ENCODE measurements at regions of chr1 and their contacts with region 1.

Region 1: GRCh38 chr1:168439456-168440375 is 104.1 kb downstream of the XCL2 start:
- DNase-seq: peak; percentile 91
- H3K4me3 Mint-ChIP-seq: peak overlapping the region; percentile 41
- H3K27ac Mint-ChIP-seq: no peak overlapping the region
- H3K4me1 Mint-ChIP-seq: peaks cover 30% of the 10 kb centered on the region
- H3K27me3 Mint-ChIP-seq: no peaks in the 10 kb centered on the region

Region 2: DNA sequence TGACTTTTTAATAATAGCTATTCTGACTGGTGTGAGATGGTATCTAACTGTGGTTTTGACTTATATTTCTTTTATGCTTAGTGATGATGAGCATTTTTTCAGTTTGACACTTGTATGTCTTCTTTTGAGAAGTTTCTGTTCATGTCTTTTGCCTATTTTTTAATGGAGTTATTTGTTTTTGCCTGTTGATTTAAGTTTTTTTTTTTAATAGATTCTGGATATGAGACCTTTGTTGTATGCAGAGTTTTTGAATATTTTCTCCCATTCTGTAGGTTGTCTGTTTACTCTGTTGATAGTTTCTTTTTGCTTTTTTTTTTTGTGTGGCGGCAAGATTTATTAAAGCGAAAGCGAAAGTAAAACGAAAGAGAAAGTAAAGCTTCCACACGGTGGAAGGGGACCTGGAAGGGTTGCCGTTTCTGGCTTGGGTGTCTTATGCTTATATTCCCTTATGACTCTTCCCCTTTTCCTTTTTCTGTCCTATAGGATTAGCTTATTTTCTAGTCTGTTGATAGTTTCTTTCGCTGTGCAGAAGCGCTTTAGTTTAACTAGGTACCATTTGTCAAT is 91.5 kb before region 1 on chr1:
- CTCF ChIA-PET with region 1: interaction called, 72 read pairs
- intact Hi-C with region 1: no loop called
- DNase-seq: peak; percentile 23
- H3K4me3 Mint-ChIP-seq: peak overlapping the region; percentile 76
- H3K27ac Mint-ChIP-seq: peak overlapping the region; percentile 84
- H3K4me1 Mint-ChIP-seq: peaks cover 16% of the 10 kb centered on the region
- H3K27me3 Mint-ChIP-seq: no peaks in the 10 kb centered on the region

Region 3: GRCh38 chr1:168560370-168560769 is 120.7 kb after region 1 on chr1:
- CTCF ChIA-PET with region 1: interaction called, 10 read pairs
- intact Hi-C with region 1: no loop called
- DNase-seq: no peak
- H3K4me3 Mint-ChIP-seq: no peak overlapping the region
- H3K27ac Mint-ChIP-seq: no peak overlapping the region
- H3K4me1 Mint-ChIP-seq: peaks cover 11% of the 10 kb centered on the region
- H3K27me3 Mint-ChIP-seq: no peaks in the 10 kb centered on the region

Region 4: DNA sequence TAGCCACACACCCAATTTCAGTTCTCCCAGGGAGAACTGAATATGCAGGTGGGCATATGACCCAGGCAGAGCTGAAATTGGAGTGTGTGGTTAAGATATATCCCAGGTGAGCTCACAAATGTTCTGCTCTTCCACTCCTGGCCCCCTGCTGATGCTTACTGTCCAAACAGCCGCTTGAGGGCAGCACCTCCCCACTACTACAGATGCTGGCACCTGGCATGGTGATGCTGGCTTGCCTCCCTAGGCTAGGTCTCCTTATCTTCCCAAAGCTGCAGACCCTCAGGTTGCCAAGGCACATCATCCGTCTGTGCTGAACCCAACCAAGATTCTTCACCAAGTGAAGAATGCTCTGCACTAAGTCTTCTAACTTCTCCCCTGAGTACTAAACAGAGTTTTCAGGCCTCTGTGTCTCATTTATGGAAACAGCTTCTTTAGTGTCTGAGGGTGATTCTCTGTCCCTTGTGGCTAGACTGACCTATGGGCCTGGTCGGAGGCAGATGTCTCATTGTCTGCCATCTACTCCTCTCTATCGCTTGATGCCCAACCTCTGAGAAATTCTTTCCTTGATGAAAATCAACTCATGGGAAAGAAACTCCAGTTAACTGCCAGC is 163.9 kb after region 1 on chr1:
- CTCF ChIA-PET with region 1: interaction called, 29 read pairs
- intact Hi-C with region 1: loop called (anchors 1 kb)
- DNase-seq: peak; percentile 84
- H3K4me3 Mint-ChIP-seq: no peak overlapping the region
- H3K27ac Mint-ChIP-seq: no peak overlapping the region
- H3K4me1 Mint-ChIP-seq: no peaks in the 10 kb centered on the region
- H3K27me3 Mint-ChIP-seq: peaks cover 3% of the 10 kb centered on the region

Region 5: DNA sequence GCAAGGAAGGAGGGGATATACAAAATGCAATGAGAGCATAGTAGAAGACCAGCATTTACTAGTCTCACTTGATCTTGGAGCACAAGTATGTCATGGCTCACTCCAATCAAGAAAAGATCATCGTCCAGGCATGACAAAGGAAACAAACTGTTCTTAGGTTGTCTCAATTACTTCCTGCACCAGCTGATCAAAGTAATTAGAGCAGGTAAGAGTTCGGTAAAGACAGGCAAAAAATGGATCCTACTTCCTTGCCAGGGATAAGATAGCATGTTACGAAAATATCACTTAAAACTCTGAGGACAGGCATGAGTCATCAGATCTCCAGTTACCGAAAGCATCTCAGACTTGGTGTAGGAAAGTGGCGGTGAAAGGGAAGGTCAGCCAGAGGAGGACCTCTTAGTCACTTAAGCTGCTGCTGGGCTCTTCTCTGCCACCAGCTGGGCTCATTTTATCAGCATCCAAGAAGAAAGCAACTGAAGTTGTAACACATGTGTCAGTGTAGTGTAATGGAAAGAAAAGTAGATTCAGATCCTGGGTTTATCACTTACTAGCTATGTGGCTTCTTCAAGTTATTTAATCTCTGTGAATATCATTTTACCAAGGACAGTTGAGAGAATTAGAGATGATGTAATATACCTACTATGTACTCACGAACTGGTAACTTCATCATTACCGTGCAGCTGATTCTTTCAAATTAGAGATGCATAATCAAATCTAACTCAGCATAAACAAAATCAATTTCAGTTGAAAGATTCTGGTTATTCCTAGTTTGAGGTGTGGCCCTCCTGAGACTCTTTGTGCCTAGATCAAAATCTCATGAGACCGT is 183.5 kb after region 1 on chr1:
- CTCF ChIA-PET with region 1: no interaction called
- intact Hi-C with region 1: no loop called
- DNase-seq: no peak
- H3K4me3 Mint-ChIP-seq: no peak overlapping the region
- H3K27ac Mint-ChIP-seq: no peak overlapping the region
- H3K4me1 Mint-ChIP-seq: no peaks in the 10 kb centered on the region
- H3K27me3 Mint-ChIP-seq: peaks cover 3% of the 10 kb centered on the region

Region 6: DNA sequence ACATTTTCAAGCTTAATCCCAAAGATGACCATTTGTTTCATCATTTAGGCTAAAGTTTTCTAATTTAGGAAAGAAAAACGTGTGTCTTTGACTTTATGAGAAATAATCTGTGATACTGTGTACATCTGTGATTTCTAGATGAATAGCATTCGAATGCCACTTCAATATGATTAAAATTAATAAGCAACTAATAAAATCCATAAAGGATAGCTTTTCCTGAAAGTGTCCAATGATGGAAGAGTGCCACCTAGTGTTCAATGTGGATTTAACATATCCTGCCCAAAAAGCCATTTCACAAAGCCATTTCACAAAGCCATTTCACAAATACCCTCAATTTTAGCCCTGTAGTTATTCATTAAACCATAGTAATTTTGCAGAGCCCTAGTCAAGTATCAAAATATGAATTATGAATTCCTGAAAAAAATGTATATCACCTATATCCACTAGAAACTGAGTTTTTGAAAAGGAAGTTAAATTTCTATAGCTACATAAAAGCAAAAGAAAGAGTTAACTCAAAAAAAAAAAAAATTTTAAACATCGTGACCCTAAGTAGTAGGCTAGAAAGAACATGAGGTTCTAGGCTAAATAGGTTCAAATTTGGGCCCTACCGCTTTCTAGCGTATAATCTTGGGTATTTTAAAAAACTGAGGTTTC is 908.8 kb after region 1 on chr1:
- CTCF ChIA-PET with region 1: interaction called, 3 read pairs
- intact Hi-C with region 1: loop called (anchors 1 kb)
- DNase-seq: peak; percentile 31
- H3K4me3 Mint-ChIP-seq: no peak overlapping the region
- H3K27ac Mint-ChIP-seq: no peak overlapping the region
- H3K4me1 Mint-ChIP-seq: peaks cover 9% of the 10 kb centered on the region
- H3K27me3 Mint-ChIP-seq: no peaks in the 10 kb centered on the region

Measured in activated naive CD4-positive, alpha-beta T cell treated with anti-CD3 and anti-CD28 coated beads for 36 hours (primary cell).